Prostate gland (tissue), 2 donors: ENCODE measurements at regions of chrX and their contacts with region 1.

Region 1: DNA sequence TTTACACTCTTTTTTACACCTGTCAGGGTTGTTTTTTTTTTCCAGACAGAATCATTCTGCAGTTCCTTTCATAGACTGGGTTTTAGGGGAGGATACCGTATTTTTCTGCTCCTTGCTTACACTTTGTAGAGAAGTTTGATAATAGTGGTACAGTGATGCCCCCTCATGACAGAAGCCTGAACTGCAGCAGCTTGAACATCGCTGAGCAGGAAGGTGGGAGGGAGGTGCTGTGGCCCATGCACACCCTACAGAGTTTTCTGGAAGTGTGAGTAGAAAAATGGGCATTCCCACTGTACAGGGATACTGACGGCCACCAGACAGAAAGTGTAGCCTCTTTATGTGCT is 54.5 kb downstream of the RAB40A start:
- DNase-seq: peak; percentile 57
- H3K4me3 ChIP-seq: peak overlapping the region in 1 of 2 donors; percentile 9
- H3K27ac ChIP-seq: no peak overlapping the region
- H3K4me1 ChIP-seq: no peaks in the 10 kb centered on the region
- H3K27me3 ChIP-seq: no peaks in the 10 kb centered on the region
- CTCF ChIP-seq: peak; percentile 31 to 78 (median 59)
- POLR2A ChIP-seq: no peak

Region 2: DNA sequence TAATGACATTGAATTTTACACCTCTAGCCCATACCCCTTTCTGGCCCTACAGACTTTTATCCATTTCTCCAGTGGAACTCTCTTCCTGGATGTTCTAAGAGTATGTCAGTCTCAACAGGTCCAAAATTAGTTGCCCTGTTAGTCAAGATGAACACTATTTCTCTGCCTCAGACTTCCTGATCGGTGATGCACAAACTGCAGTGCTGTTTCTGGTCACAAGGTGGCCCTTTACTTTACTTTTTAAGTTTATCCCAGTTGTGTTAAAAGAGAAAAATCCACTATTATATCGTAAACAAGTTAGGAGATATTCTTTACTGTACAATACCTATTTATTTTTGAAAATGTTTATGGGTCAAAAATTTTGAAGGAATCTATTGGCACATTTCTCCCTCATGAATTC is 121.6 kb before region 1 on chrX:
- intact Hi-C with region 1: loop called (anchors 5 kb)
- DNase-seq: peak; percentile 16
- H3K4me3 ChIP-seq: no peak overlapping the region
- H3K27ac ChIP-seq: no peak overlapping the region
- H3K4me1 ChIP-seq: no peaks in the 10 kb centered on the region
- H3K27me3 ChIP-seq: no peaks in the 10 kb centered on the region
- CTCF ChIP-seq: peak; percentile 16 to 63 (median 54)
- POLR2A ChIP-seq: no peak